ENCODE measurements at regions of chr16 and their contacts with region 1.

Region 1: DNA sequence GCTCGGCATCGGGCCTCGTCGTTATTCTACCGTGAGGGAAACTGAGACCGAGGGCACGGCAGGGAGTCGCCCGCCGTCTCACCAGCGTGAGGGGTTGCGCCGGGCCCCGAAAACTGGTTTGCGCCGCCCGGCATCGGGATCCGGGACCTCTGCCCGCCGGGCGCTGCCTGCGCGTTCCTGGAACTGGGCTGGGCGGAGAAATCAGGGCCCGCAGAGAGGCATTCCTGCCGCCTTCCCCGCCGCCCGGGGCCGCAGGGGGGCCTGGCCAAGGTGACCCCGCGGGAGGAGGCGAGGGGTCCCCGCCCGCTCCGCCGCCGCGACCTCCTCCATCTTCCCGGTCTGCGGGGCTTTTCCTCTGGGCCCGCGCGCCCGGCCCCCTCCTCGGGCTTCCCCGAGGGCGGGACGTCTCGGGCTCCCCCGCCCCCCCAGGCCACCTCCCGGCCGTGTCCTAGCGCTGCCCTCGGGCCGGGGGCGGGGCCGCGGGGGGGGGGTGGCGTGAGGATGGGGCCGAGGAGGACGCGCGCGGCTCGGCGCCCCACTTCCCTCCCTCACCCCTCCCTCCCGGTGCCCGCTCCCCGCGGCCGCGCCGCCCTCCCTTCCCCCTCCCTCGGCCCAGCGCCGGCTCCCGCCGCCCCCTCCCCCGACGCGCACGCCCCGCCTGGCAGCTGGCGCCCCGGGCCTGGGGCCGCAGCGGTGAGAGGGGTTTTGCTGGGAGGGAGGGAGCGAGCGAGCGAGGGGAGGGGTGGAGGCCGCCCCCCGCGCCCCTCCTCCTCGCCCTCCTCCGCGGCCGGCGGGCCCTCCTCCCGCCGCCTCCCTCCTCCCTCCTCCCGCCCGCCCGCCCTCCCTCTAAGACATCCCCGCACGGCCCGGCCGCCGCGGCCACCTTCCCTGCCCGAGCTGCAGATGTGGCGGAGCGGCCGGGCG is at the start of gene GLIS2:
- DNase-seq: peak; percentile 82
- ATAC-seq: peak; percentile 82
- H3K4me3 ChIP-seq: peak within 1 kb of the TSS; percentile 74
- H3K27ac ChIP-seq: peak within 1 kb of the TSS; percentile 73
- H3K4me1 ChIP-seq: peaks cover 22% of the 10 kb centered on the region
- H3K27me3 ChIP-seq: no peaks in the 10 kb centered on the region
- CTCF ChIP-seq: no peak
- POLR2A ChIP-seq: no peak
- RAD21 ChIP-seq: no peak
- total RNA-seq, gene GLIS2: 0.36 and 0.56 TPM in 2 replicates

Region 2: GRCh38 chr16:4271176-4272066 is 44.0 kb before region 1 on chr16:
- CTCF ChIA-PET with region 1: interaction called, 5 read pairs
- POLR2A ChIA-PET with region 1: no interaction called
- dilution Hi-C with region 1: no loop called
- in situ Hi-C with region 1: no loop called
- intact Hi-C with region 1: loop called (anchors 5 kb)
- DNase-seq: peak; percentile 91
- ATAC-seq: peak; percentile 87
- H3K4me3 ChIP-seq: peak overlapping the region; percentile 83
- H3K27ac ChIP-seq: peak overlapping the region; percentile 86
- H3K4me1 ChIP-seq: no peaks in the 10 kb centered on the region
- H3K27me3 ChIP-seq: no peaks in the 10 kb centered on the region
- CTCF ChIP-seq: peak; percentile 28; the same call in 1 of the 2 replicates
- POLR2A ChIP-seq: no peak
- RAD21 ChIP-seq: peak; percentile 19; the same call in 1 of the 2 replicates

Region 3: DNA sequence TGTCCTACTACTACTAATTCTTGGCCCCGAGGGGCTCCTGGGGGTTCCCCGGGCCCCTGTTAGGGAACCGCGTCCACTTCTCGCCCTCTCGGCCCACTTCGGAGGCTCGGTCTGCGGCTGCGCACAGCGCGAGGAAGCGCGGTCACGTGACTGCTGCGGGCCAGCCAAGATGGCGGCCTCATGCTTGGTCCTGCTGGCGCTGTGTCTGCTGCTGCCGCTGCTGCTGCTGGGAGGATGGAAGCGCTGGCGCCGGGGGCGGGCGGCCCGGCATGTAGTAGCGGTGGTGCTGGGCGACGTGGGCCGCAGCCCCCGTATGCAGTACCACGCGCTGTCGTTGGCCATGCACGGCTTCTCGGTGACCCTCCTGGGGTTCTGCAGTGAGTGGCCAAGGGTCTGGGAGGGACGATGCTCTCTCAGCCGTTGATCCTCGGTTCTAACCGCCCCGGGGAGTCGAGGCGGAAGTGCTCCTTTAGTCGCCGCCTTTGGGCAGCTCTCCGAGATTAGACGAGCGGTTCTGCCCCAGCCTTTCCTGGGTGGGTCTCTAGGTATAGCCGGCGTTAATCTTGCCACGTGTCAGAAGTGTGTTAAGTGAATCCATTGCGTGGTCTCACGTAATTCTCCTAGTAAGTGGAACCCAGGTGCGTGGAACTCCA is 756.4 kb after region 1 on chr16 and contains the start of gene ALG1:
- CTCF ChIA-PET with region 1: no interaction called
- POLR2A ChIA-PET with region 1: no interaction called
- dilution Hi-C with region 1: no loop called
- in situ Hi-C with region 1: no loop called
- intact Hi-C with region 1: no loop called
- DNase-seq: peak; percentile 82
- ATAC-seq: peak; percentile 94
- H3K4me3 ChIP-seq: peak within 1 kb of the TSS; percentile 79
- H3K27ac ChIP-seq: peak within 1 kb of the TSS; percentile 79
- H3K4me1 ChIP-seq: peaks cover 3% of the 10 kb centered on the region; the same call in 1 of the 2 replicates
- H3K27me3 ChIP-seq: peaks cover 2% of the 10 kb centered on the region; the same call in 1 of the 2 replicates
- CTCF ChIP-seq: no peak
- POLR2A ChIP-seq: peak; percentile 83
- RAD21 ChIP-seq: no peak
- total RNA-seq, gene ALG1: 34.7 and 41.0 TPM in 2 replicates